CD8-positive, alpha-beta T cell (primary cell): ENCODE measurements at regions of chr1 and their contacts with region 1.

Region 1: GRCh38 chr1:91783423-91784170 is 102.4 kb downstream of the TGFBR3 start:
- DNase-seq: no peak
- ATAC-seq: no peak
- H3K4me3 ChIP-seq: no peak overlapping the region
- H3K4me3 Mint-ChIP-seq: no peak overlapping the region
- H3K27ac ChIP-seq: no peak overlapping the region
- H3K27ac Mint-ChIP-seq: no peak overlapping the region
- H3K4me1 ChIP-seq: no peaks in the 10 kb centered on the region
- H3K4me1 Mint-ChIP-seq: peaks cover 7% of the 10 kb centered on the region
- H3K27me3 ChIP-seq: no peaks in the 10 kb centered on the region
- H3K27me3 Mint-ChIP-seq: no peaks in the 10 kb centered on the region
- CTCF ChIP-seq: no peak

Region 2: GRCh38 chr1:91633438-91633837 is 150.2 kb before region 1 on chr1:
- CTCF ChIA-PET with region 1: no interaction called
- POLR2A ChIA-PET with region 1: no interaction called
- intact Hi-C with region 1: no loop called
- DNase-seq: no peak
- ATAC-seq: no peak
- H3K4me3 ChIP-seq: no peak overlapping the region
- H3K4me3 Mint-ChIP-seq: no peak overlapping the region
- H3K27ac ChIP-seq: no peak overlapping the region
- H3K27ac Mint-ChIP-seq: no peak overlapping the region
- H3K4me1 ChIP-seq: no peaks in the 10 kb centered on the region
- H3K4me1 Mint-ChIP-seq: peaks cover 2% of the 10 kb centered on the region
- H3K27me3 ChIP-seq: no peaks in the 10 kb centered on the region
- H3K27me3 Mint-ChIP-seq: no peaks in the 10 kb centered on the region
- CTCF ChIP-seq: no peak

Region 3: GRCh38 chr1:91699339-91699974 is 84.1 kb before region 1 on chr1:
- CTCF ChIA-PET with region 1: no interaction called
- POLR2A ChIA-PET with region 1: no interaction called
- intact Hi-C with region 1: no loop called
- DNase-seq: no peak
- ATAC-seq: no peak
- H3K4me3 ChIP-seq: no peak overlapping the region
- H3K4me3 Mint-ChIP-seq: no peak overlapping the region
- H3K27ac ChIP-seq: peak overlapping the region in 1 of 2 experiments; percentile 58
- H3K27ac Mint-ChIP-seq: peak overlapping the region; percentile 62
- H3K4me1 ChIP-seq: peaks cover 16% of the 10 kb centered on the region
- H3K4me1 Mint-ChIP-seq: peaks cover 19% of the 10 kb centered on the region
- H3K27me3 ChIP-seq: no peaks in the 10 kb centered on the region
- H3K27me3 Mint-ChIP-seq: no peaks in the 10 kb centered on the region
- CTCF ChIP-seq: no peak

Region 4: DNA sequence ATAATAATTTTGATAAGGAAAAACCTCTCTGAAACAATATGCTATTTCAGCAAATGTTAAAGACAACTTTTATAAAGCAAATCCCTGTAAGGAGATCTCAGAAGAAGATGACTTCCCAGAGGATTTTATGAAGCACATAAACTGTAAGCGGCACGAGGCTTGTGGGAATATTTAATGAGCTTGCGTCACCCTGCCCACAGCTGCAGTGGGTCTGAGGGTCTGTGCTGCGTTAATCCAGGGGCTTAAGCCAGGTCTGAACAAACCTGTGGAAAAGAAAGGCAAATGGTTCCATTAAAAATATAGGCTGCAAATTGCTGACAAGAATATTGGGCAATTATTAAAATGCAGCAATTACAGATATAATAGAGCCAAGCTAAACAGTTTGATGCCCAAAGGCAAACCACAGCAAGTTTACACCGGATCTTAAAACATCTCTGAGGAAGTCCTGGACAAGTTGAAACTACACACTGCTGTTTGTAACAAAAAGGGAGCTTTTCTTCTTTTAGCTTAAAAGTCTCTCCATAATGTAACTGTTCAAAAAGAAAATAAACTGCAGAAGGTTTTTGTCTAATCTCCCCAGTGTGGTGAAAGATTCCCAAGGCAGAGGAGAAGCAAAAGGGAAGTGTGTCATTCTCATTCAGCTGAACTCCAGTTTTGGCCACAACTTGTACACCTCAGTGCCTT is 80.6 kb after region 1 on chr1:
- CTCF ChIA-PET with region 1: no interaction called
- POLR2A ChIA-PET with region 1: no interaction called
- intact Hi-C with region 1: loop called in 1 of 2 experiments (anchors 2 kb)
- DNase-seq: no peak
- ATAC-seq: no peak
- H3K4me3 ChIP-seq: no peak overlapping the region
- H3K4me3 Mint-ChIP-seq: no peak overlapping the region
- H3K27ac ChIP-seq: no peak overlapping the region
- H3K27ac Mint-ChIP-seq: no peak overlapping the region
- H3K4me1 ChIP-seq: no peaks in the 10 kb centered on the region
- H3K4me1 Mint-ChIP-seq: peaks cover 21% of the 10 kb centered on the region
- H3K27me3 ChIP-seq: no peaks in the 10 kb centered on the region
- H3K27me3 Mint-ChIP-seq: no peaks in the 10 kb centered on the region
- CTCF ChIP-seq: no peak